Dorsolateral prefrontal cortex (tissue), 120 donors: ENCODE measurements at regions of chr7 and their contacts with region 1.

Region 1: GRCh38 chr7:120272261-120272660 is 714 bp upstream of the KCND2 start:
- DNase-seq: peak in 2 of 10 donors; percentile 37 to 66
- H3K4me3 ChIP-seq: peak overlapping the region; percentile 36 to 78 (median 64)
- H3K27ac ChIP-seq: peak overlapping the region in 54 of 59 donors; percentile 24 to 91 (median 78)
- H3K27me3 ChIP-seq: peaks cover 0 to 17% (median 0%) of the 10 kb centered on the region in 45 donors
- CTCF ChIP-seq: peak; percentile 39 to 77 (median 68)

Region 2: DNA sequence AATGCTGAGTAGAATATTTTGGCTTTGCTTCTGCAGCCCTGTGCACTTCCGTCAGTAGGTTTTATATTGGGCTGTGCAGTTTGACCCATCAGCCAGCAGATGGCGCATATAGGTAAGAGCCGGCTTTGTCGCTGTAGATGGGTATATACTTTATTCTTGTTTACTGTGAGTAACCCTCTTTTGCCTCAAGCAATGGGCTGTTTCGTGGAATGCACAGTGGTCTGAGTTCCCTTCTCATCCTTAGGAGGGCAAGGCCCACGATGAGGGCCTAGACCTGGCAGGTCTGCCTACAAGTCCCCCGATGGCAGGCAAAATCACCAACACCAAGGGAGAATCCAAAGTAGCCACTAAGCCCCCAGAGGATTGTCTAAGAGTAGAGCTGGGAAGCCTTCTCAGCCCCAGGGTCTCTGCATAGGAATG is 1002.2 kb before region 1 on chr7:
- intact Hi-C with region 1: loop called (anchors 5 to 10 kb)
- DNase-seq: peak in 8 of 10 donors; percentile 29 to 73 (median 55)
- H3K4me3 ChIP-seq: no peak overlapping the region
- H3K27ac ChIP-seq: no peak overlapping the region
- H3K27me3 ChIP-seq: peaks cover 0 to 3% (median 0%) of the 10 kb centered on the region in 45 donors
- CTCF ChIP-seq: peak; percentile 57 to 90 (median 80)

Region 3: DNA sequence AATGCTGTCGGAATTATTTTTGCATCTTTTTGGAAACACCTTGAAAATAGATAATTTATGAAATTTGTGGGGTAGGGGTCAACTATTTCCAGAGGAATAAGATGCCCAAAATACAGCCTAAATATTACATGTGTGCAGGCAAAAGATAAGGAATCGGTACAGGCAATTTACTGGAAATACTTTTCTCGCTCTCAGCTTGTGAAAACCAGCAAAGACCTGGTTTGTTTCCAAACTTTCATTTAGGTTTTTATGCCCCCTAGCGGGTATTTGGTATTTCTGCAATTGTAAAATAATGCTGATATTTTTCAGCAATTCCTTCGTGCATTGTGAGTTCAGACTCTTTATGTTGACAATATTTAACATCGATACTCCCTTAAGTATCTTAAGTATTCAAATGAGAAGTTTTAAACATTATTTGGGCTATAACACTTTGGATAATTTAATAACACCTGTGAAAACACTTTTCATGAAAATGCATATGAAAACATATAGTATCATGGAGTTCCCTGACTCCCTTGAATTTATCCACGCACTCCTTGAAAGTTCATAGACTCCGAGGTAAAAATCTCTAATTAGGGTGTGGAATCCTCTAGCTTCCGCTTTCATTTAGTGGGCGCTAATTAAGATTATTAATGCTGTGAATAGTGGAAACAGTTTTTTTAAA is 453.2 kb after region 1 on chr7:
- intact Hi-C with region 1: loop called in 1 of 2 experiments (anchors 10 kb)
- DNase-seq: no peak
- H3K4me3 ChIP-seq: peak overlapping the region in 55 of 59 donors; percentile 4 to 60 (median 34)
- H3K27ac ChIP-seq: peak overlapping the region in 5 of 59 donors; percentile 12 to 41 (median 18)
- H3K27me3 ChIP-seq: no peaks in the 10 kb centered on the region
- CTCF ChIP-seq: peak; percentile 45 to 89 (median 73)